ENCODE measurements at regions of chr4 and their contacts with region 1.

Region 1: DNA sequence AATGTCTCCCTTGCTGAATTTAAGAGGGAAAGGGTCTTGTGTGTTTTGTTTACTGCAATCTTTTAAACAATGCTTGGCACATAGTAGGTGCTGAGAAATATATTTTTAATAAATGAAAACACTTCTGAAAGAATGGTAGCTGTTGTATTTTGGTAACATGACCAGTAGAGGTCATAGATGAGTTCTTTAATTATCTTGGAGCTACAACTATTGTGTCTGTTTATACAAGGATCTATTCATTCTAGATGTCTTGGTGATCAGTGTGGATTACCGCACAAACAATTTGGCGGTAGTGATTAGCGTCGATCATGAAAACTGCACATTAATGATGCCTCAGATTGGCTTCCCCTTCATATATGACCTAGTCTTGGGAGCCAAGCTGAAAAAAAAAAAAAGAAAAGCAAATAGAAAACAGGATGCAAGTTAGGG is 21.4 kb upstream of the SCRG1 start:
- DNase-seq: no peak
- ATAC-seq: peak in 1 of 4 donors; percentile 60
- H3K4me3 ChIP-seq: no peak overlapping the region
- H3K27ac ChIP-seq: no peak overlapping the region
- H3K4me1 ChIP-seq: no peaks in the 10 kb centered on the region
- H3K27me3 ChIP-seq: no peaks in the 10 kb centered on the region
- CTCF ChIP-seq: peak; percentile 49

Region 2: DNA sequence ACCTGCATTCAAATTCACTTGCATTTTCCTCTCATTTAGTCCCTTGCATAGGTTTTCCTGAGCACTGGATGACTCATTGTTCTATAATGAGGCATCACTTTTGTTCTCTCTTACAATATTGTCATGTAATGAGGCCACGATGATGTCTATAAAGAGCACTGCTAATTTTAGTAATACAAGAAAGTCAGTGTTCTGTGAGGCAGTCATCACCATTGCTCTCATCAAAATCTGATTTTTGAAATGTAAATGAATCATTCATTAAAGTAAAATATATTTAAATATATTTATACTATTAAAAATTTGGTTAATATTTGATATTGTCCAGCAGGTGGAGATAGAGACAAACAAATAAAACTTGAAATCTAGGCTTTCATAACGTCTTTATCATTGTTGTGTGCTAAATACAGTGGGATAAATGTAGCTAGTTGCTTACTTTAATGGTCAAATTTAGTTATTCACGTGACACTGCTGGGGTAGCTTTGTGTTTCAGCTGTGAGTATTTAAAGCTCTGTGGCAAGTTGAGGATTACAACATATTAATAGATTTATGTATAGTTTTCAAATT is 101.6 kb before region 1 on chr4:
- intact Hi-C with region 1: loop called (anchors 2 kb)
- DNase-seq: no peak
- ATAC-seq: peak; percentile 62 to 88 (median 74)
- H3K4me3 ChIP-seq: no peak overlapping the region
- H3K27ac ChIP-seq: no peak overlapping the region
- H3K4me1 ChIP-seq: no peaks in the 10 kb centered on the region
- H3K27me3 ChIP-seq: no peaks in the 10 kb centered on the region
- CTCF ChIP-seq: peak; percentile 66

Region 3: GRCh38 chr4:173494013-173494970 is 74.0 kb after region 1 on chr4:
- intact Hi-C with region 1: loop called (anchors 1 to 5 kb)
- DNase-seq: no peak
- ATAC-seq: peak; percentile 82 to 95 (median 82)
- H3K4me3 ChIP-seq: peak overlapping the region; percentile 56
- H3K27ac ChIP-seq: no peak overlapping the region
- H3K4me1 ChIP-seq: no peaks in the 10 kb centered on the region
- H3K27me3 ChIP-seq: peaks cover 0 to 48% (median 3%) of the 10 kb centered on the region in 3 donors
- CTCF ChIP-seq: peak; percentile 73

Measured in psoas muscle (tissue), 8 donors.